Astrocyte of the cerebellum (primary cell): ENCODE measurements at regions of chr10 and their contacts with region 1.

Region 1: DNA sequence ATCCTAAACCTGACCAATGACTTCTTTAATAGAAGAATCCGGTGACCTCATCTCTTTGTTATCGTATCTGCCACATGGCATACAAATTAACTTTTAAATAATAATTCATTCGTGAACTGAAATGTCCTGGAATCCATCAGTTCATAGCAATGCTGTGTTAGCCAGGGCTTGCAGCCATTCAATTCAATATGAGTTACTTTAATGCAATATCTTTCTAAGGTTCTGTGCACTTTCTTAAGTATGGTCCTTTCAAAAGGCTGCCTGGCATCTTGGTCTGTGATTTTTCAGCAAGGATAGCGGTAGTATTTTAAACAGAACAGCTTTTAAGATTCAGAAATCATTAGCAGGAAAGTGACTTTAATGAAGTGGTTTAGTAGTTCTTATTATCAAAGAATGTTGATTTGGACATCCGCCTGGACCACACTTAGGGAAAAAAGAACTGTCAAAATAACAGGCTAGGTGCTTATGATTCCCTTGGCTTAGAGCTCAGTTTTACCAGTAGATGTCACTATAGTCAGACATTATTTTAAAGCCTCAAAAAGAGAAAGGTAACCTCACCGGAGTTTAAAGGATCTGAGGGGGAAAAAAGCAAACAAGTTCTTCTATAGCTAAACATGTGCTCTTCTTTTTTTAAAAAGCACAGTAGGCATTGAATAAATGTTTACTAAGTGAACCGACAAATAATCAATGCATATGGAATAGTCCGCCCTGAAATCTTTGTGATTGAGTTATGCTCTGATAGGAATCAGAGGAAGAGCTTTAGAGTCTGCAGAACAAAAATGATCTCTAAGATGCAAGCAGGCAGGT is 22.7 kb downstream of the SLC35G1 start:
- DNase-seq: peak; percentile 49
- H3K4me3 ChIP-seq: no peak overlapping the region
- CTCF ChIP-seq: peak; percentile 55

Region 2: GRCh38 chr10:93991114-93991513 is 74.7 kb after region 1 on chr10:
- in situ Hi-C with region 1: no loop called
- DNase-seq: no peak
- H3K4me3 ChIP-seq: no peak overlapping the region
- CTCF ChIP-seq: no peak

Region 3: GRCh38 chr10:94320285-94320914 is 403.9 kb after region 1 on chr10:
- in situ Hi-C with region 1: loop called (anchors 25 kb)
- DNase-seq: peak; percentile 62
- H3K4me3 ChIP-seq: no peak overlapping the region
- CTCF ChIP-seq: peak; percentile 74